ENCODE measurements at regions of chr9 and their contacts with region 1.

Region 1: DNA sequence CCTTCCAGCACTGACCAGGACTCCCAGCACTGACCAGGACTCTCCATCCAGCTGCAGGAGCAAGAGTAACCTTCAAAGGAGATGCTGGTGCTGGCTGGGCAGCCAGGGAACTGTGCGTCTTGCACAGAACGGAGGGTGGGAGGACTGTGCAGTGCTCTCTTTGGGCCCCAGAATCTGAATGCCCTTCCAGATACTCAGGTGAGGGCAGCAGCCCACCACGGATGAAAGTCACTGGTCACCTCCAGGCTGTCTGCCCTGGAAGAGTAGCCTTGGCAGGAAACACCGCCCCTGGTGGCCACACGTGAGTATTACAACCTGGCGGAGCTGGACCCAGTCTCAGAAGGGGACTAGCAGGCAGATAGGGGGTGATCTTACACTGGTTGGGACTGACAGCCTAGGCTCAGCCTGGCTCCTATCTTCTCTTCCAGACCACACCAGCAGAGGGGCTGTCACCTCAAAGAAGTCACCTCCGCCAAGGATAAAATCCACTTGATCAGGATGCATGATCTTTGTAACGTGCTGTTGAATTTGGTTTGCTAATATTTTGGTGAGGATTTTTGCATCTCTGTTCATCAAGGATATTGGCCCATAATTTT is 4.8 kb upstream of the SARDH start:
- H3K4me3 ChIP-seq: no peak overlapping the region
- H3K27ac ChIP-seq: no peak overlapping the region
- H3K4me1 ChIP-seq: no peaks in the 10 kb centered on the region; the same call in 1 of the 2 replicates
- CTCF ChIP-seq: peak; percentile 99

Region 2: DNA sequence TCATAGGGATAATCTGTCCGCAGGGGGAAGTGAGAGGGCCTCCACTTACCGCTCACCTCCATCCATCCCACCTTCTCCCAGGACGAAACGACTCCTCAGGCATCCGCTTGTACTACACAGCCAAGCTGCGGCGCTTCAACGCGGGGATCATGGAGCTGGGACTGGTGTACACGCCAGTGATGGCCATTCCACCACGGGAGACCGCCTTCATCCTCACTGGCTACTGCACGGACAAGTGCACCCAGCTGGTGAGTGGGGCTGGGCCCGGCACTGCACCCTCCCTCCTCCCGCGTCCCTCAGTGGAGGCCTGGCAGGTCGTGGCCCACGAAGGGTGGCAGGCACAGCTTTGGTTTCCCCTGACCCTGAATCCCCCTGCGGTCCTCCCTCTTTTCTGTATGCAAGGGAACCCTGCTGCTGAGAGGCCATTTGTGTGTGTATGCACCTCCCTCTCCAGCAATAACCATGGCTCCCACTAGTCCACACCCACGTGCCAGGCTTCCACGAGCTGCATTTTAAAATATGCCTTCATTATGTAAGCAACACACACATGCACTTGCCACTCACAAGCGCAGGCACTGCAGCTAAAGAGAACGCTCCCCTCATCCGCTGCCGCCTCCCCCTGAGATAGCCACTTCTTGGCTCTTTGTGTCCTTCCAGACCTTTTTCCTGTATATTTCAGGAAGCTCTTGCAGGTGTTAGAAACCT is 95.0 kb before region 1 on chr9:
- CTCF ChIA-PET with region 1: no interaction called
- POLR2A ChIA-PET with region 1: no interaction called
- H3K4me3 ChIP-seq: no peak overlapping the region
- H3K27ac ChIP-seq: no peak overlapping the region
- H3K4me1 ChIP-seq: no peaks in the 10 kb centered on the region
- CTCF ChIP-seq: no peak

Region 3: GRCh38 chr9:133664173-133665051 is 78.5 kb before region 1 on chr9:
- CTCF ChIA-PET with region 1: no interaction called
- POLR2A ChIA-PET with region 1: no interaction called
- H3K4me3 ChIP-seq: no peak overlapping the region
- H3K27ac ChIP-seq: no peak overlapping the region
- H3K4me1 ChIP-seq: no peaks in the 10 kb centered on the region
- CTCF ChIP-seq: no peak

Region 4: DNA sequence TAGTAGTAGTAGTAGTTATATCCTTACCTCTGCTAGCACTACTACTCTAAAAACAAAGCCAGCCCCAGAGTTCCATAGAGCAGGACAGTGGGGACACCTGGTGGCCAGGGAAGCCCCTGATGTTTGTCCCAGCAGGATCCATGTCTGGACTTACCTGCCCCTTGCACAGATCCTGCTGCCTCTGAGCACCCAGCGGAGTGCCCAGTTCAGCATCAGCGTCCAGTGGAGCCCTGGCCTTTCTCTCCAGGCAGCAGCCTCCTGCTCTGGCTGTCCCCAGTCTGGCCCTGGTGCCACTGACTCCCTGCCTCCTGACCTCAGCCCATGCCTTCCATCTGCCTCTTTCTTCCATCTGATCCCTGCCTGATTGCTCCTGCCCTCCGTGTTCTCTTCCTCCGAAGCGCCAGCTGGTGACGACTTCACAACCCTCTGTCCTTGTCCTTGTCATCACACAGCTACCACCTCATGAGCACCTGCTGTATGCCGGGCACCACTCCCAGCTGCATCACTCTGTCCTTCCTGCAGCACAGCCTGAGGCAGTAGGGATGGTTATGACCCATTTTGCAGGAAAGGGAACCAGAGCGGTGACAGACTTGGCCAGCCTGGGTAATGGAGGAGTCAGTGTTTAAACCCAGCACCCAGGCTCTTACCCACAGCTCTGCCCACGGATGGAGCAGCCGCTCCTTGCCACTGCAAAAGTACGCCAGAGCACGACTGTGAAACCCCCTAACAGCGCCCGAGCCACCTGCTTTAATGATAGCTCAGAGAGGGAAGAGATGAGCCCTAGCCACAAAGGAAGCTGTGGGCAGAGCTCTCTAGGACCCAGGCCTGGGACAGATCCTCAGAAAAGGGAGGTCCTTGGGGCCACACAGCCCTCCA is 16.3 kb before region 1 on chr9:
- CTCF ChIA-PET with region 1: interaction called, 21 read pairs
- POLR2A ChIA-PET with region 1: no interaction called
- H3K4me3 ChIP-seq: no peak overlapping the region
- H3K27ac ChIP-seq: no peak overlapping the region
- H3K4me1 ChIP-seq: no peaks in the 10 kb centered on the region
- CTCF ChIP-seq: peak; percentile 51

Region 5: GRCh38 chr9:133731876-133732638 is 10.9 kb before region 1 on chr9:
- CTCF ChIA-PET with region 1: interaction called, 21 read pairs
- POLR2A ChIA-PET with region 1: no interaction called
- H3K4me3 ChIP-seq: no peak overlapping the region
- H3K27ac ChIP-seq: no peak overlapping the region
- H3K4me1 ChIP-seq: no peaks in the 10 kb centered on the region
- CTCF ChIP-seq: no peak

Region 6: DNA sequence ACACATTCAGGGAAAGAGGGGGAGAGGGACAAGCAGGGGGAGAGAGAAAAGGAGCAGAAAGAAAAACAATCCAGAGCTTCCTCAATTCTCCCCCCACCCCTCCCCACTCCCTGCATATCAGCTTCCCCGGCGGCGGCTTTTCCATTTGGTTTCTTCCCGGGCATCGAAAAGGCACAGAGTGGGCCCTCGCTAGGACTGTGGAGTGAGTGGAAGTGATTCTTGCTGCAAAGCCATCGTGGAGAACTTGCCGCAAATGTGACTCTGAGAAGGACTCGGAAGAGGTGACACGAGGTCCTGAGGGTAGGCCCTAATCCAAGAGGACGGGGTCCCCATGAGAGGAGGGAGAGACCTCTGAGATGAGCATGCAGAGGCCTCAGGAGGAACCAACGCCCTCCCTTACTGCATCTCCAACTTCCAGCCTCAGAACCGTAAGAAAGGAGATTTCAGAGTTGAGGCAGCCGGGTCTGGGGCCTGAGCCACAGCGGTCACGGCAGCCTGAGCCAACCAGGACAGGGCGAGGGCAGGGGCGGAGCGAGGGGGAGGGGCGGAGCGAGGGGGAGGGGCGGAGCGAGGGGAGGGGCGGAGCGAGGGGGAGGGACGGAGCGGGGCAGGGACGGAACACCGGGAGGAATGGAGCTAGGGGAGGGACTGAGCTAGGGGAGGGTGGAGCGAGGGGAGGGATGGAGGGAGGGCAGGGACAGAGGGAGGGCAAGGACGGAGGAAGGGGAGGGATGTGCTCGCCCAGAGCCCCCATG is 16.4 kb after region 1 on chr9:
- CTCF ChIA-PET with region 1: interaction called, 46 read pairs
- POLR2A ChIA-PET with region 1: no interaction called
- H3K4me3 ChIP-seq: no peak overlapping the region
- H3K27ac ChIP-seq: no peak overlapping the region
- H3K4me1 ChIP-seq: no peaks in the 10 kb centered on the region
- CTCF ChIP-seq: no peak

Region 7: GRCh38 chr9:133768859-133769425 is 26.0 kb after region 1 on chr9:
- CTCF ChIA-PET with region 1: interaction called, 14 read pairs
- POLR2A ChIA-PET with region 1: no interaction called
- H3K4me3 ChIP-seq: no peak overlapping the region
- H3K27ac ChIP-seq: no peak overlapping the region
- H3K4me1 ChIP-seq: no peaks in the 10 kb centered on the region
- CTCF ChIP-seq: no peak

Region 8: GRCh38 chr9:133773889-133774655 is 31.1 kb after region 1 on chr9:
- CTCF ChIA-PET with region 1: interaction called, 14 read pairs
- POLR2A ChIA-PET with region 1: no interaction called
- H3K4me3 ChIP-seq: no peak overlapping the region
- H3K27ac ChIP-seq: no peak overlapping the region
- H3K4me1 ChIP-seq: no peaks in the 10 kb centered on the region
- CTCF ChIP-seq: no peak

Region 9: GRCh38 chr9:133782157-133783130 is 39.5 kb after region 1 on chr9:
- CTCF ChIA-PET with region 1: interaction called, 20 read pairs
- POLR2A ChIA-PET with region 1: no interaction called
- H3K4me3 ChIP-seq: no peak overlapping the region
- H3K27ac ChIP-seq: no peak overlapping the region
- H3K4me1 ChIP-seq: no peaks in the 10 kb centered on the region
- CTCF ChIP-seq: peak; percentile 77

Region 10: DNA sequence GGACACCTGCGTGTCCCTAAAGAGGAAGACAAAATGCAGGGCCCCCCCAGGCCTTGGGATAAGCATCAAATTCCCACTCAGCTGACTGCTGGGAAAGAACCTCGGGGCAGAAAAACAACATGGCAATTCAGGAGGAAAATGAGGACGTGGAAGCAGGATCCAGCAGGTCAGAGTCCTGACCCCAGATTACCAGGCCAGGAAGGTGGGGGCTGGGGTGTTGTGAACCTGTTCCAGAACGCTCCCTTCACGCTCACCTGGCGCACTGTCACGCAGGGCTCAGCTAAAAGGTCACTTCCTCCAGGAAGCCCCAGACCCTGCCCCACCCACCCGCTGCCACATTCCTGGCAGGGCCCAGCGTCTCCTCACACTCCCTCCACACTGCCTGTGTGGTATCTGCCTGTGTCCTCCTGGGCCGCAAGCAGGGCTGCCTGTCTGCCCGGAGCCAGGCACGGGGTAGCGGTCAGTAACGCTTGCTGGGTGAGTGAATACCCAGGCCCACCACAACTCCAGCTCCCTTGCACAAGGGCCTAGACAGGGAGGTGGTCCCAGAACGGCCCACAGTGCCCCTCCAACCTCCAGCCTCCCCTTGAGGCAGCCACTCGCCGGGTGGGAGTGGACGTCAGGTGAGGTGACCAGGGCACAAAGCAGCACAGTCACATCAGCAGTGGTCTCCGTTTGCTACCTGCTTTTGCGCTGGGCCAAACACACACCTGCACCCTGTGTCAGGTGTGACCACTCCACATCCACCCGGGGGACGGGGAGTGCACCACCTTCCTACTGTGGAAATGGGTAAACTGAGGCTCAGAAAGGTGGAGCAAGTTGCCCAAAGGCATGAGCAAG is 231.1 kb after region 1 on chr9:
- CTCF ChIA-PET with region 1: no interaction called
- POLR2A ChIA-PET with region 1: no interaction called
- H3K4me3 ChIP-seq: no peak overlapping the region
- H3K27ac ChIP-seq: no peak overlapping the region
- H3K4me1 ChIP-seq: peaks cover 5% of the 10 kb centered on the region; the same call in 1 of the 2 replicates
- CTCF ChIP-seq: no peak